ENCODE measurements at regions of chr5 and their contacts with region 1.

Region 1: DNA sequence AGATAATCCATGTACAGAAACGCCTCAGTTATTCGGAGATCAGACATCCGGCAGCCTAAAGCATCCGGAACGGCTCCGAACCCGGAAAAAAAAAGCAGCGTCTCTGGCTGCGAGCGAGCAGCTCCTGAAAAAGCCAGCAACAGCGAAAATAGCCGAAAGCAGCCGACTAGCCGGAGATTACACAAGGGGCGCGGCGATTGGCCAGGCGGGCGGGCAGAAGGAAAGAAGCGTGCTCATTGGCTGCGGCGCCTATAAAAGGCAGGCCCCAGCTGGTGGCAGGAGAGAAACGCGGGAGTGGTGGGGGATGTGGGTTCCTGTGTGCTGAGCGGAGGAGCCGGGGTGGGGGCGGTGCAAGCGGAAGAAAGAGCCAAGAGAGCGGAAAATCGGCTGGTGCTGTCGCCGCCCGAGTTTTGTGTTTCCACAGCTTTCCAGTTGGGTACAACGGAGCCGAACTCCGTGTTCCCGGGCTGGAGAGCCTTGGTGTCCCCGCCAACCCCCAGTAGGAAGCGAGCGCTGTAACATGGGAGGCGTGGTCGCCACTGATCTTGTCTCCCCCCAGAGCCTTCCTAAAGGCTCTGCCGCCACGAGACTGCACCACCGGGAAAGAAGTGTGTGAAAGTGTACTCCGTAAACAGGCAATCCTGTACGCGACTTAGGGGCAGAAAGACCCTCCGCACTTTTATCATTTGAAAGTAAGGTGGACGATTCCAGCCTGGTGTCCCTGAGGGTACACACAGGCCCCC is at the start of gene ARL15:
- DNase-seq: peak; percentile 98 to 99
- ATAC-seq: peak; percentile 97 to 99 (median 98)
- H3K4me3 ChIP-seq: peak within 1 kb of the TSS; percentile 73 to 96 (median 87)
- H3K27ac ChIP-seq: peak within 1 kb of the TSS; percentile 75 to 95 (median 90)
- H3K4me1 ChIP-seq: peaks cover 0 to 34% (median 25%) of the 10 kb centered on the region in 9 donors
- H3K27me3 ChIP-seq: no peaks in the 10 kb centered on the region
- CTCF ChIP-seq: no peak
- total RNA-seq, gene ARL15: 22.6 to 31.8 (median 28.7) TPM

Region 2: DNA sequence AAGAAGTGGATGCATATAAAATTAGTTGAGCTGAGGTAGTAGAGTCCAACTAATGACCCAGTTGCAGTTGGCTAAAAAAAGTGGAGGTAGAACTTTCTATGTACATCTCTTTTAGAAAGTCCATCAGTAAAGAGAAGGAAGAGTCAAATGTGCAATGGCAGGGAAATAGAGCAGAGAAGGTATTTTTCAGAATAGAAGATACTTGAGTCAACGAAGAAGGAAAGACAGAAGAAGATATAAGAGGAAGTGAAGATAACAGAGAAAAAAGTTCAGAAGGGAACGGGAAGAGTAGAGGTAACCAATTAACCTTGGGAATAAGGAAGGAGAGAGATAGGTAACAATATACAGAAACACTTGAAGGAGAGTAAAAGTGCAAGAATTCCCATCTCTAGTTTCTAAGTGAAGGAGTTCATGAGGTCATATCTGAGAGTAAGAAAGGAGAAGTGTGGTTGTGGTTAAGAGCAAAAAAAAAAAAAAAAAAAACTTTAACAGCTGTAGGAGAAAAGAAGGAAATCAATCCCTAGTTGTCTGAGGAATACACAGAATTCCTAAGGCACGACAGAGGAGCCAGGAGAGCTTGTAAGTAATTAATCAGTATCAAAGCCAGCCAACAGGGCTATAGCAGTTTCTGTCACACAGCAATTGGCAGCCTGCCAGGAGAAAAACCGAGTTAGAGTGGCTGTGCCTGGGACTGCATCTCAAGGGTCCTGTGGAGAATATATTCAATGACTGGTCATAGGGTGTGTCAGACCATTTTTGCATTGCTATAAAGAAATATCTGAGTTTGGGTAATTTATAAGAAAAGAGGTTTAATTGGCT is 61.2 kb before region 1 on chr5:
- intact Hi-C with region 1: loop called in 6 of 10 experiments (anchors 2 to 10 kb)
- DNase-seq: peak; percentile 24 to 29
- ATAC-seq: peak in 3 of 8 donors; percentile 15 to 41 (median 25)
- H3K4me3 ChIP-seq: no peak overlapping the region
- H3K27ac ChIP-seq: peak overlapping the region in 1 of 10 donors; percentile 70
- H3K4me1 ChIP-seq: peaks cover 0 to 89% (median 30%) of the 10 kb centered on the region in 9 donors
- H3K27me3 ChIP-seq: no peaks in the 10 kb centered on the region
- CTCF ChIP-seq: no peak

Region 3: DNA sequence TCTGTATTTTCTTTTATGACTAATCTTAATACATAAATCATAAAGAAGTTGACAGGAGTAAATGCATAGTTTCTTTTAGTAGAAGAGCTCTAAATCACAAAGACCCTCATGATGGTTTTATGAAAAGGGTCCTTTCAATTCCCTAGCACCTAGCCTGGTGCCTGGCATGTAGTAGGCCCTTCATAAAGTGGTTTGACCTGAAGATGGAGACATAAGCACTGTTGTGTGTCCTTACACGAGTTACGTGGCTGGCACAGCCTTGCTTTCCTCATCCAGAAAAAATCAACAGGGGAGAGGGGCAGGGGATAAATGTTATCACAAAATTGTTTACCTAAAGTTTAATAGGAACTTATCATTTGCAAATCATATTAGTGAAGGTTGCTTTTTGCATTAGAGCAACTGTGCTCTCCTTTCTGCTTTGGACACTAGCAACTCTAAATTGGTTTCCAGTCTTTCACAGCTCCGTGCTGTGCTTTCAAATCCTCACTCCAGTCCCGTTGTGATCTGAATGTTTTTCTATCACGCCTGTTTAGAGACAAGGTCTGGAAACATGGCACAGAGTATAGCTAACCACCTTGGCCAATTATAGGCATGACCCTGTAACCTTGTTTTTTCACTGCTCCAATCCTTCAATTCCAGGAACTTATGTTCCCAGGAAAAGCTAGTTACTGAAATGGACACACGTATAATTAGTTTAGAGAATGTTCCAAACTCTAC is 56.0 kb before region 1 on chr5:
- intact Hi-C with region 1: loop called in 9 of 10 experiments (anchors 1 to 10 kb)
- DNase-seq: peak in 1 of 2 donors; percentile 30
- ATAC-seq: peak; percentile 66 to 90 (median 86)
- H3K4me3 ChIP-seq: peak overlapping the region in 9 of 10 donors; percentile 4 to 46 (median 25)
- H3K27ac ChIP-seq: peak overlapping the region; percentile 20 to 75 (median 65)
- H3K4me1 ChIP-seq: peaks cover 0 to 82% (median 37%) of the 10 kb centered on the region in 9 donors
- H3K27me3 ChIP-seq: no peaks in the 10 kb centered on the region
- CTCF ChIP-seq: peak; percentile 15 to 70 (median 49)

Region 4: GRCh38 chr5:54263447-54263846 is 47.2 kb before region 1 on chr5:
- intact Hi-C with region 1: loop called in 4 of 10 experiments (anchors 5 to 10 kb)
- DNase-seq: no peak
- ATAC-seq: no peak
- H3K4me3 ChIP-seq: no peak overlapping the region
- H3K27ac ChIP-seq: no peak overlapping the region
- H3K4me1 ChIP-seq: peaks cover 0 to 54% (median 8%) of the 10 kb centered on the region in 9 donors
- H3K27me3 ChIP-seq: no peaks in the 10 kb centered on the region
- CTCF ChIP-seq: no peak

Region 5: GRCh38 chr5:54387659-54388232 is 77.1 kb after region 1 on chr5:
- intact Hi-C with region 1: loop called in 1 of 10 experiments (anchors 10 kb)
- DNase-seq: no peak
- ATAC-seq: peak; percentile 79 to 91 (median 84)
- H3K4me3 ChIP-seq: no peak overlapping the region
- H3K27ac ChIP-seq: peak overlapping the region in 6 of 10 donors; percentile 23 to 74 (median 55)
- H3K4me1 ChIP-seq: peaks cover 0 to 48% (median 28%) of the 10 kb centered on the region in 9 donors
- H3K27me3 ChIP-seq: no peaks in the 10 kb centered on the region
- CTCF ChIP-seq: no peak